CD4-positive, alpha-beta memory T cell (primary cell): ENCODE measurements at regions of chr15 and their contacts with region 1.

Region 1: DNA sequence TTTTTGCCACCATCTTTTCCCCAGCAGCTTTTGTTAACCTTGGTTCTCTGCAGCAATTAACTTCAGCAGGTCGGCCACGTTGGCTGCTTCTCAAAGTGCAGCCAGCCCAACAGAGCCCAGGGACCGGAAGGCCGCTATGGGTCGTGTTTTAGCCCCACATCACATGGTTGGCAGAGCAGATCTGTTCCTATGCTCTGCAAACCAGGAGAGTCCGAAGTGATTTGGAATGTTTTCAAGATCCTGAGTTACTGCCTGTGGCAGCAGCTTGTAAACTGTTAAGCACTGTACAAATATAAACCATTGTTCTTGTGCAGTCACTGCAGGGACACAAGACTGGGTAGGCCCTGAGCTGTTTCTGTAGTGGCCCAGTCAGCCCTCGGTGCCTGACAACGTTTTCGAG is 69.6 kb upstream of the MYZAP start:
- DNase-seq: no peak
- H3K4me3 ChIP-seq: no peak overlapping the region
- H3K4me3 Mint-ChIP-seq: no peak overlapping the region
- H3K27ac ChIP-seq: no peak overlapping the region
- H3K27ac Mint-ChIP-seq: no peak overlapping the region
- H3K4me1 ChIP-seq: no peaks in the 10 kb centered on the region
- H3K4me1 Mint-ChIP-seq: no peaks in the 10 kb centered on the region
- H3K27me3 ChIP-seq: no peaks in the 10 kb centered on the region
- H3K27me3 Mint-ChIP-seq: peaks cover 5 to 9% of the 10 kb centered on the region in 2 donors

Region 2: GRCh38 chr15:57534281-57534680 is 12.1 kb after region 1 on chr15:
- CTCF ChIA-PET with region 1: interaction called, 25 read pairs
- POLR2A ChIA-PET with region 1: no interaction called
- intact Hi-C with region 1: no loop called
- DNase-seq: no peak
- H3K4me3 ChIP-seq: no peak overlapping the region
- H3K4me3 Mint-ChIP-seq: no peak overlapping the region
- H3K27ac ChIP-seq: no peak overlapping the region
- H3K27ac Mint-ChIP-seq: no peak overlapping the region
- H3K4me1 ChIP-seq: no peaks in the 10 kb centered on the region
- H3K4me1 Mint-ChIP-seq: no peaks in the 10 kb centered on the region
- H3K27me3 ChIP-seq: no peaks in the 10 kb centered on the region
- H3K27me3 Mint-ChIP-seq: peaks cover 5 to 9% of the 10 kb centered on the region in 2 donors